ENCODE measurements at regions of chr19 and their contacts with region 1.

Region 1: GRCh38 chr19:13132471-13133180 is 14.6 kb downstream of the NACC1 start:
- DNase-seq: no peak
- H3K4me3 ChIP-seq: no peak overlapping the region
- H3K27ac ChIP-seq: no peak overlapping the region
- H3K4me1 ChIP-seq: no peaks in the 10 kb centered on the region
- H3K27me3 ChIP-seq: no peaks in the 10 kb centered on the region
- CTCF ChIP-seq: no peak
- EP300 ChIP-seq: no peak
- POLR2A ChIP-seq: no peak
- RAD21 ChIP-seq: no peak

Region 2: GRCh38 chr19:13117772-13118423 is 14.7 kb before region 1 on chr19 and contains the start of gene NACC1:
- CTCF ChIA-PET with region 1: interaction called, 5 read pairs
- POLR2A ChIA-PET with region 1: interaction called, 228 read pairs
- DNase-seq: peak; percentile 70 to 87
- H3K4me3 ChIP-seq: peak within 1 kb of the TSS; percentile 92 to 100 (median 96)
- H3K27ac ChIP-seq: peak within 1 kb of the TSS; percentile 97
- H3K4me1 ChIP-seq: peaks cover 14 to 36% (median 26%) of the 10 kb centered on the region in 4 experiments
- H3K27me3 ChIP-seq: no peaks in the 10 kb centered on the region
- CTCF ChIP-seq: no peak
- EP300 ChIP-seq: peak in 1 of 2 experiments; percentile 13; a peak in 1 of 3 replicates
- POLR2A ChIP-seq: no peak; a peak in 1 of 3 replicates
- RAD21 ChIP-seq: no peak
- total RNA-seq, gene NACC1: 226 and 234 TPM in 2 replicates

Region 3: GRCh38 chr19:13143135-13143534 is 10.5 kb after region 1 on chr19:
- CTCF ChIA-PET with region 1: interaction called, 3 read pairs
- POLR2A ChIA-PET with region 1: interaction called, 18 read pairs
- DNase-seq: no peak
- H3K4me3 ChIP-seq: no peak overlapping the region
- H3K27ac ChIP-seq: no peak overlapping the region
- H3K4me1 ChIP-seq: peaks cover 0 to 8% (median 3%) of the 10 kb centered on the region in 4 experiments; a peak in 3 of 7 replicates
- H3K27me3 ChIP-seq: no peaks in the 10 kb centered on the region
- CTCF ChIP-seq: no peak
- EP300 ChIP-seq: no peak
- POLR2A ChIP-seq: no peak
- RAD21 ChIP-seq: no peak